AG04450 (cell line): ENCODE measurements at regions of chr17 and their contacts with region 1.

Region 1: GRCh38 chr17:27206447-27206846 is 87.5 kb upstream of the WSB1 start:
- DNase-seq: no peak
- H3K4me3 ChIP-seq: no peak overlapping the region
- H3K27ac ChIP-seq: no peak overlapping the region
- H3K27me3 ChIP-seq: peaks cover 5% of the 10 kb centered on the region
- CTCF ChIP-seq: peak; percentile 30; the same call in 1 of the 2 replicates

Region 2: DNA sequence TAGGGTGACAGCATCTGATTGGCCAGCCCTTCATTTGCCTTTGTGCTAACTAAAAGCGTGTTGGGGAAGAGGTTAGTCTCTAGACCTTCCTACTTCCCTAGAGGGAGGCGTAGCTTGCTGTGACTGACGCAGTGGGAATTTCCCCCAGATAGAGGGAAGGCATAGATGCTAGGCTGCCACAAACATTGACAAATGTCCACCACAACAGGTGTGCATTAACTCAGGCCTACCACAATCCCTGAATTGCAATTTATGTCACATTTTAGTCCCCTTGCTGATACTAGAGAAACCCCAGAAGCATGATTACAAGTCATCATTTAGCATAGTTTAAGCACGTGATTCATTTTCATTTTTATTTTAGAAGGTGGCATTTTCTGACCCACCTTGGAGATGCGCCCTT is 11.2 kb after region 1 on chr17:
- CTCF ChIA-PET with region 1: interaction called, 13 read pairs
- POLR2A ChIA-PET with region 1: no interaction called
- DNase-seq: no peak
- H3K4me3 ChIP-seq: no peak overlapping the region
- H3K27ac ChIP-seq: no peak overlapping the region
- H3K27me3 ChIP-seq: peaks cover 8% of the 10 kb centered on the region
- CTCF ChIP-seq: no peak